Prostate gland (tissue), 2 donors: ENCODE measurements at regions of chr7 and their contacts with region 1.

Region 1: GRCh38 chr7:134690016-134690415 is 43.4 kb downstream of the BPGM start:
- DNase-seq: no peak
- H3K4me3 ChIP-seq: no peak overlapping the region
- H3K27ac ChIP-seq: peak overlapping the region; percentile 72 to 75
- H3K4me1 ChIP-seq: no peaks in the 10 kb centered on the region
- H3K27me3 ChIP-seq: no peaks in the 10 kb centered on the region
- CTCF ChIP-seq: peak in 3 of 4 experiments; percentile 12 to 68 (median 56)
- POLR2A ChIP-seq: no peak

Region 2: GRCh38 chr7:134730411-134730829 is 40.4 kb after region 1 on chr7:
- intact Hi-C with region 1: loop called (anchors 1 kb)
- DNase-seq: no peak
- H3K4me3 ChIP-seq: no peak overlapping the region
- H3K27ac ChIP-seq: peak overlapping the region; percentile 69 to 72
- H3K4me1 ChIP-seq: no peaks in the 10 kb centered on the region
- H3K27me3 ChIP-seq: no peaks in the 10 kb centered on the region
- CTCF ChIP-seq: no peak
- POLR2A ChIP-seq: no peak

Region 3: GRCh38 chr7:134750083-134751062 is 60.4 kb after region 1 on chr7:
- intact Hi-C with region 1: loop called (anchors 5 kb)
- DNase-seq: peak; percentile 12
- H3K4me3 ChIP-seq: no peak overlapping the region
- H3K27ac ChIP-seq: no peak overlapping the region
- H3K4me1 ChIP-seq: no peaks in the 10 kb centered on the region
- H3K27me3 ChIP-seq: no peaks in the 10 kb centered on the region
- CTCF ChIP-seq: peak; percentile 21 to 43 (median 37)
- POLR2A ChIP-seq: no peak

Region 4: DNA sequence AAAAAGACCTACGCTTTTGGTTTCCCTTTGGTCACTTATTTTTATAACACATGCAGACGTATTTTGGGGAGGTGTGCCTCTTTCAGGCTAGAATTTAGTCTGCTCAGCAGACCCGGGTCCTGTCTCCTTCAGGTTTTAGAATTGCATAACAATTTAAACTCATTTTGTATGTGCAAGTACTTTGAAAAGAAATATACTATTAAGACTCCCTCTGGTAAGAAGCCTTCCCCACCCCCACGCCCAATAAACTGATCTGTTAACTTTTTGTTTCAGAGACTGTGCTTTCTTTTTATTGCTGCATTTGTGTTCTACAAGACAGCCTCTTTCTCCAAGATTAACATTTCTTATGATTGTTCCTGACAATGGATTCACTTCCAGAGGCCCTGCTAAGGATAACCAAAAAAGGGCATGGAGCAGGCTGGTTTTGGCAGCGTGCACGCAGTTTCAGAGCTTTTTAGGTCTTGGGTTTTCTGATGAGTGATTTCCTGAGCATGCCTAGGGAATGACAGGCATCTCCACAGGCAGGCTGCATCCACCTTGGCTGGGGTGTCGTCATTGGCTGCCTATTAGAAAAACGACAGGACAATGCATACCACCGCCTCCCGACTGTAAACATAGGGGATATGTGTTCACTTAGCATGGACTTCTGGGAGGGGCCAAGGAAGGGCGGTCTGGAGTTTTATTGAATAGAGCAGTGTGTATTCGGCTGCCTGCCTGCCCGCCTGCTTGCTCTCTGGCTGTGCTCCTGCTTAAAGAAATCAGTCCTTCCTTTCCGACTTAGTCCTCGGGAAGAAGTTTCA is 89.1 kb after region 1 on chr7 and contains the start of gene CALD1:
- intact Hi-C with region 1: loop called (anchors 5 kb)
- DNase-seq: peak; percentile 91
- H3K4me3 ChIP-seq: peak within 1 kb of the TSS; percentile 40 to 57
- H3K27ac ChIP-seq: peak within 1 kb of the TSS; percentile 85 to 88
- H3K4me1 ChIP-seq: peaks cover 7% of the 10 kb centered on the region
- H3K27me3 ChIP-seq: no peaks in the 10 kb centered on the region
- CTCF ChIP-seq: no peak
- POLR2A ChIP-seq: peak; percentile 47
- total RNA-seq, gene CALD1: 307 to 314 TPM

Region 5: DNA sequence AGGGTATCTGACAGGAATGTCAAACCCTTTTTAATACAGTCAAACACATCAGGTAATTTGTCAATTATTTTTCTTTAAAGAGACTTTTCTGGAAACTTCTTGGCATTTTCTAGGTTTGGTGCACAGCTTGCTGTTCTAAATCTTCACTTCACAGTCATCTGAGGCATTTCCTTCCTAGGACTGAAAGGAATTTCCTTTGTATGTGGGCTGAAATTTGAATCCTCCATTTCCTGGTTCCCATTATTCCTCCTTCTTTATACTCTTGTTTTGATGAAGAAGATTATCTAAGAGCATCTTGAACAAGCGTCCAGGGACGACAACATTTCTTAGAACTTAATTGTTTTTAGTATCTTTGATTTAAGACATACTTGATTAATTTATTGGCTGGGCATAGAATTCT is 114.3 kb after region 1 on chr7:
- intact Hi-C with region 1: no loop called
- DNase-seq: no peak
- H3K4me3 ChIP-seq: no peak overlapping the region
- H3K27ac ChIP-seq: no peak overlapping the region
- H3K4me1 ChIP-seq: no peaks in the 10 kb centered on the region
- H3K27me3 ChIP-seq: no peaks in the 10 kb centered on the region
- CTCF ChIP-seq: no peak
- POLR2A ChIP-seq: no peak

Region 6: DNA sequence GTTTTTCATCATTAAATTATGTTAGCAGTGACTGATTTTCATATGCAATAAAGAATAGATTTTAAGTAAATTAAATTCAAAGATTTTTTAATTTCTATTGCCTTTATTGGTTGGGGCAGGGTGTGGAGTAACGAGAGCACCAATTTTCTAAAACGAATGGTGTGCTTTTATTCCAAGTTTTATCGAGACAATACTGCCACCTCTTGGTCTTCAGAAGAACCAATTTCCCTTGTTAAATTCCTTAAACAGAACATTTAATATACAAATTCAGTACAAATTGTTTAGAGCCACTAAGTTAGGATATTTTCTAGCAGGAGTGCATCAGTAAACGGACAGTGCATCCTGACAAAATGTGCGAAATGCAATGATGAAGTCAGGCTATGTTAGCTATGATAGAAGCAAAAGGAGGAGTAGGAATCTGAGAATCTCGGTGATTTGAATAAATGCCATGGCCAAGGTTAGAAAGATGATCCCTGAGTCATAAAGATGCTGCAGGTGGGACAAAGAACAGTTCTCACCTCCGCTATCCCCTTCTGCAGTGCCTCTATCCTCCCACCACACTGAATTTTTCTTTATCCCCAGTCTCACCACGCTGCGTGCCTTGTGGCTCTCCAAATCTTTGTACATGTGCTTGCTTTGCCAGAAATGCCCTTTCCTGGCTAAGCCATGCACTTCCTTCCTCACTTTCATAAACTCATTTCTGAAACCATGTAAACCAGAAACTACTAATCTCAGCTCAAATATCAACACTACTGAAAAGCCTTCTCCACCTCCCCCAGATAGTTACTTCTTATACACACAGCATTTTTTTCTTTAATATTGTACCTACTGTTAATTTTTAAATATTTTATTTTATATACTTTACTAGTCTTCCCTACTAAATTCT is 264.4 kb after region 1 on chr7:
- intact Hi-C with region 1: loop called (anchors 5 kb)
- DNase-seq: no peak
- H3K4me3 ChIP-seq: no peak overlapping the region
- H3K27ac ChIP-seq: no peak overlapping the region
- H3K4me1 ChIP-seq: no peaks in the 10 kb centered on the region
- H3K27me3 ChIP-seq: no peaks in the 10 kb centered on the region
- CTCF ChIP-seq: peak; percentile 13 to 74 (median 54)
- POLR2A ChIP-seq: no peak

Region 7: DNA sequence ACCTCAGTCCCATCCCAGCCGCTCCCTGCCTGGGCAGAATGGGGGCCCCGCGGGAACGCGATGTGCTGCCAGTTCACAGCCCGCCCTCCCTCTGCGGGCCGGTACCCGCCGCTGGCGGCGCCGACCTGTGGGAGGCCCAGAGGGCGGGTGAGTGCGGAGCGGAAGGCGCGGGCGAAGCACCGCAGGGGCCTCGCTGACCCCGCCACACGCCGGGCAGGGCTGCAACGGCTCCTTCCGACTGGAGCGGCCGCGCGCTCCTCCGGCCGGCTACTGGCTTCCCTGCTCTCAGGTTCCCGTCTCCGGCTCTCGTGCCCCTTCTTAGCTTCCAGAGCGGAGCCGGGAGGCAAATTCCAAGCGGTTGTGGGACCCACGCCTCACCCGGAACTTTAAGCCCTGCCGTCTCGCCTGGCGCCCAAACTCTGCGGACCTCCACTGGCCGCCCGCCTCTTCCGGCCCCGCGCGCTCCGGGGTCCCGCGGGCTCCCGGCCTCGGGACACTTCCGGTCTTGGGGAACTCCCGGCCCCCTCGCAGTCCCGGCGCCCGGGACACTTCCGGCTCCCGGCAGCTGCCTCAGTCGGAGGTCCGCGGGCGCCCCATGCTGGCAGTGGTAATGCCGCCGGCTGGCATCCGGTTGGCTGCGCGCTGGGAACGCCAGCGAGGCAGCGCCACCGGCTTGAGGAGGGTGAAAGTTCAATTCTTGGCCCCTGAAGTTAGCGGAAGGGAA is 480.4 kb after region 1 on chr7 and contains the start of gene CYREN:
- intact Hi-C with region 1: loop called (anchors 5 kb)
- DNase-seq: peak; percentile 92
- H3K4me3 ChIP-seq: peak within 1 kb of the TSS; percentile 69 to 72
- H3K27ac ChIP-seq: peak within 1 kb of the TSS; percentile 90 to 91
- H3K4me1 ChIP-seq: peaks cover 3% of the 10 kb centered on the region
- H3K27me3 ChIP-seq: no peaks in the 10 kb centered on the region
- CTCF ChIP-seq: peak; percentile 62 to 92 (median 82)
- POLR2A ChIP-seq: peak; percentile 51
- total RNA-seq, gene CYREN: 44.5 to 53.6 TPM

Region 8: GRCh38 chr7:135260930-135261721 is 571.1 kb after region 1 on chr7:
- intact Hi-C with region 1: loop called (anchors 10 kb)
- DNase-seq: no peak
- H3K4me3 ChIP-seq: no peak overlapping the region
- H3K27ac ChIP-seq: peak overlapping the region; percentile 9 to 46
- H3K4me1 ChIP-seq: no peaks in the 10 kb centered on the region
- H3K27me3 ChIP-seq: no peaks in the 10 kb centered on the region
- CTCF ChIP-seq: no peak
- POLR2A ChIP-seq: no peak